Posterior vena cava (tissue), 2 donors: ENCODE measurements at regions of chr1 and their contacts with region 1.

Region 1: GRCh38 chr1:192489748-192490147 is 85.8 kb upstream of the RGS1 start:
- DNase-seq: peak; percentile 83

Region 2: DNA sequence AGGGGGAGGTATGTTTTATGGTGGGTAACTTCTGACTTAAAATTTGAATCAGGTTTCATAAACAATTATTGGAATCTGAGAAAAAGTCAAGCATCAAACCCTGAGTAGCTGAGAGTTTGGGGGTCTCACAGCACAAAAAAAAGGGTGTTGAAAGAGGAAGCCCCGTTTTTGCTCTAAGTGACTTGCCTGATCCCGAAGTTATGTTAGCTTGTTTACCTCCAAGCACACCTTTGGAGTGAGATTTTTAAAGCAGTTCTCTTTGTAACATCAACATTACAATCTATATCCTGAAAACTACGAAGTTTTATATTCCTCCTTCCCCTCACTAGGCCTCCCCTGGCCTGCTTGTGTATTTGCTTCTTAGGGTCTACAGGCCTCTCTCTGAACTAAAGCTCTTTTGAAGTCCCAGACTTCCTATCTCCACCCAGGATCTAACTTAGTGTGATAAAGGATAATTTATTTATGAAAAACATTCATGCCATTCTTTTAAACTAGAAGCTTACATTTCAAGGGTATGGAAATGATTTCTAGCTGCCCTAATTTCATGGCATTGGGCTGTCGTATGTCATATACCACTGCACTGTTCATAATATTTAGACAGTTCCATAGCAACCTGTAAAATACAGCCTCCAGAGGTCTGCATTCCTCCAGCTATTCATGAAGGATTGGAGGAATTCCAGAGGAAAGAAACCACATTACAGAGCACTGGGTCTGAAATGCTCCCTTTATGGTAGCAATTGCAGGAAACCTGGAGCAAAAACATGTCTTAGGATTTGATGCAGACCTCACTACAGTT is 49.7 kb after region 1 on chr1:
- intact Hi-C with region 1: loop called in 1 of 2 experiments (anchors 10 kb)
- DNase-seq: no peak